ENCODE measurements at regions of chr17 and their contacts with region 1.

Region 1: GRCh38 chr17:28951991-28952975 is 965 bp upstream of the PHF12 start:
- DNase-seq: peak; percentile 96
- ATAC-seq: peak; percentile 77
- H3K4me3 Mint-ChIP-seq: no peak overlapping the region
- H3K27ac Mint-ChIP-seq: no peak overlapping the region
- H3K4me1 Mint-ChIP-seq: peaks cover 15% of the 10 kb centered on the region
- H3K27me3 Mint-ChIP-seq: no peaks in the 10 kb centered on the region

Region 2: DNA sequence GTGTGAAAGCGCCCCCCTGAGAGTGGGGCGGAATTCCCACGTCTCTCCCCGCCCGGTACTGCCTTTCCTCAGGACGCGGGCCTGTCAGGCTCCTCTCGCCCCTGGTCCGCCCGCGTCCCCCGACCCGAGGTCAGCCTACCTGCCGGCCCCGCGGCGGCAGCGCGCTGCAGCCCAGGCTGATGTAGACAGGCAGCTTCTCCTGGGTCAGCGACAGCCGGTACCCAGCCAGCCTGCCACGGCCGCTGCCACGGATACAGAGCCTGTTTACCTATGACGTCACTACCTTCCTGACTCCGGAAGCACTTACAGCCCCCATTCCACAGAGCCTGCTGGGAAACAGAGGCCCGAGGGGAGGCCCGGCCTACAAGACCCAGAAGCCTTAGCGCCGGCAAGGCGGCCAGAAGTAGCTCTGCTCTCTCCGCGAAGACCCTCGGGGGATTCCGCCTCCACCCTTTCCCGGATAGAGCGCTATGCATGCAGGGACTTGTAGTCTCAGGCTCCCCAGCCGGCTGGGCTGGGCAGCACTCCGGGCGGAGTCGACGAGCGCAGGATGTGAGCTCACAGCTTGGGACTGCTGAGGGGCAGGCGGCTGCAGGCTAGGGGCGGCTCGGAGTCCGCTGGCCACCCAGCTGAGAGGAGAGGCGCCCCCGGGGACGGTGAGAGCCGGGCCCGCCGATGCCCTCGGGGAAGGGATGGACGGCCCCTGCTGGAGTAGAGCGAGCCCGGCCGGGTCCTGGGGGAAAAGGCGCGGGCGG is 616.9 kb before region 1 on chr17 and contains the starts of genes IFT20 and TNFAIP1:
- CTCF ChIA-PET with region 1: no interaction called
- POLR2A ChIA-PET with region 1: no interaction called
- intact Hi-C with region 1: loop called in 1 of 2 experiments (anchors 5 kb)
- DNase-seq: peak; percentile 99
- ATAC-seq: peak; percentile 97
- H3K4me3 Mint-ChIP-seq: peak within 1 kb of the TSS; percentile 96
- H3K27ac Mint-ChIP-seq: peak within 1 kb of the TSS; percentile 91
- H3K4me1 Mint-ChIP-seq: peaks cover 36% of the 10 kb centered on the region
- H3K27me3 Mint-ChIP-seq: no peaks in the 10 kb centered on the region
- total RNA-seq, gene IFT20: 12.9 to 17.3 TPM
- total RNA-seq, gene TNFAIP1: 25.5 to 26.1 TPM

Region 3: GRCh38 chr17:28710861-28711722 is 241.2 kb before region 1 on chr17:
- CTCF ChIA-PET with region 1: no interaction called
- POLR2A ChIA-PET with region 1: interaction called, 4 read pairs
- intact Hi-C with region 1: loop called in 1 of 2 experiments (anchors 2 kb)
- DNase-seq: peak; percentile 94
- ATAC-seq: peak; percentile 90
- H3K4me3 Mint-ChIP-seq: peak overlapping the region; percentile 80
- H3K27ac Mint-ChIP-seq: peak overlapping the region; percentile 91
- H3K4me1 Mint-ChIP-seq: peaks cover 19% of the 10 kb centered on the region
- H3K27me3 Mint-ChIP-seq: peaks cover 17% of the 10 kb centered on the region

Region 4: DNA sequence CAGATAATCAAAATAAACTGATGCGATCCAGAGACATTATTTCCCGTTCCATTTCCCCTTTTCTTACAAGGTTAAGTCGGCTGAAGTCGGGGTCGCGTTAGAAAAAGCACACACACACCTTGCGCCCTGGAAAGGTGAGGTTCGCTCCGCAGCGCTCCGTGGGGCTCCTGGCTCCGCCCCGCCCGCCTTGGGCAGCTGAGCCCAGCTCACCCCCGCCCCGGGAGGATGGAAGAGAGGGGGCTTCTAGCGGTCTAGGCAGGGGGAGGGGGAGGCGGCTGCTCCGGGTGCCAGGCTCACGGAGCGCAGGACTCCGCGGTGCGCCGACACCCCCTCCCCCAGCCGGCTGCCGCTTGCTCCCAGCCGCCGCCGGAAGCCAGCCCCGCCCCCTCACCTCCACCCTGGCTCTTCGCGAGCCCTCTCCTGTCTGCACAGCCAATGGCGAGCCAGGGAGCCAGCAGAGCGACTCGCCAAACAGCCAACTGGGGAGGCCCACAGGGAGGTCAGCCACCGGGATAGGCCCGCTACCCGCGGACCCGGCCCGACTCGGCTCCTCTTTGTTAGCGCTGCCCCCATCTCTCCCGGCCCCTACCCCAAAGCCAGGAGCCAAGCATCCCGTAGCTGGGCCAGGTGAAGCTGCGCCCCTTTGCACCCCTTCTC is 140.1 kb before region 1 on chr17:
- CTCF ChIA-PET with region 1: interaction called, 5 read pairs
- POLR2A ChIA-PET with region 1: no interaction called
- intact Hi-C with region 1: loop called in 1 of 2 experiments (anchors 1 kb)
- DNase-seq: peak; percentile 99
- ATAC-seq: peak; percentile 99
- H3K4me3 Mint-ChIP-seq: peak overlapping the region; percentile 82
- H3K27ac Mint-ChIP-seq: peak overlapping the region; percentile 91
- H3K4me1 Mint-ChIP-seq: peaks cover 44% of the 10 kb centered on the region
- H3K27me3 Mint-ChIP-seq: no peaks in the 10 kb centered on the region

Region 5: DNA sequence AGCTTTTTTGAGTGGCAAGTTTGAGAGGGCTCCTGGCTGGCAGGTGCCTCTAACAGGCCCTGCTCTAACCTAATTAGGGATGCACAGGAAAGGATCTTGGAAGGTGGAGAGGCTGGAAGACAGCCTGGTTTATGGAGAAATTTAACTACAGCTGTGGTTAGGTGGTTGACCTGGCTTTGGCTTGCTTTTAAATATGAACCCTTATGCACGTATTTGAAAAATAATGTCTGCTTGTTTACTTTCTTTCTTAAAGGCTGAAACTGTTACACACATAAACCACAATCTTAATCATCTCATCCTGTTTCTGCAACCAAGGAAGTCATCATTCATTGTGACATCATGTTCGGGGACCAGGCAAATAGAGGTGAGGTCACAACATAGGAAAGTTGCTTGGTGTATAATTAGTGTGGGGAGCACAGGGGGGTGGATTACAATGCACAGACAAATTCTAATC is 26.3 kb before region 1 on chr17:
- CTCF ChIA-PET with region 1: interaction called, 26 read pairs
- POLR2A ChIA-PET with region 1: interaction called, 5 read pairs
- intact Hi-C with region 1: loop called in 1 of 2 experiments (anchors 2 kb)
- DNase-seq: peak; percentile 51
- ATAC-seq: peak; percentile 84
- H3K4me3 Mint-ChIP-seq: peak overlapping the region; percentile 36
- H3K27ac Mint-ChIP-seq: peak overlapping the region; percentile 88
- H3K4me1 Mint-ChIP-seq: peaks cover 59% of the 10 kb centered on the region
- H3K27me3 Mint-ChIP-seq: no peaks in the 10 kb centered on the region

Region 6: GRCh38 chr17:29090750-29091603 is 138.7 kb after region 1 on chr17:
- CTCF ChIA-PET with region 1: no interaction called
- POLR2A ChIA-PET with region 1: no interaction called
- intact Hi-C with region 1: no loop called
- DNase-seq: no peak
- ATAC-seq: no peak
- H3K4me3 Mint-ChIP-seq: no peak overlapping the region
- H3K27ac Mint-ChIP-seq: no peak overlapping the region
- H3K4me1 Mint-ChIP-seq: no peaks in the 10 kb centered on the region
- H3K27me3 Mint-ChIP-seq: no peaks in the 10 kb centered on the region

Region 7: GRCh38 chr17:29140051-29140621 is 187.9 kb after region 1 on chr17:
- CTCF ChIA-PET with region 1: interaction called, 5 read pairs
- POLR2A ChIA-PET with region 1: interaction called, 3 read pairs
- intact Hi-C with region 1: loop called in 1 of 2 experiments (anchors 1 kb)
- DNase-seq: peak; percentile 92
- ATAC-seq: peak; percentile 60
- H3K4me3 Mint-ChIP-seq: peak overlapping the region; percentile 89
- H3K27ac Mint-ChIP-seq: peak overlapping the region; percentile 97
- H3K4me1 Mint-ChIP-seq: peaks cover 74% of the 10 kb centered on the region
- H3K27me3 Mint-ChIP-seq: no peaks in the 10 kb centered on the region